Naive thymus-derived CD4-positive, alpha-beta T cell (primary cell): ENCODE measurements at regions of chr14 and their contacts with region 1.

Region 1: DNA sequence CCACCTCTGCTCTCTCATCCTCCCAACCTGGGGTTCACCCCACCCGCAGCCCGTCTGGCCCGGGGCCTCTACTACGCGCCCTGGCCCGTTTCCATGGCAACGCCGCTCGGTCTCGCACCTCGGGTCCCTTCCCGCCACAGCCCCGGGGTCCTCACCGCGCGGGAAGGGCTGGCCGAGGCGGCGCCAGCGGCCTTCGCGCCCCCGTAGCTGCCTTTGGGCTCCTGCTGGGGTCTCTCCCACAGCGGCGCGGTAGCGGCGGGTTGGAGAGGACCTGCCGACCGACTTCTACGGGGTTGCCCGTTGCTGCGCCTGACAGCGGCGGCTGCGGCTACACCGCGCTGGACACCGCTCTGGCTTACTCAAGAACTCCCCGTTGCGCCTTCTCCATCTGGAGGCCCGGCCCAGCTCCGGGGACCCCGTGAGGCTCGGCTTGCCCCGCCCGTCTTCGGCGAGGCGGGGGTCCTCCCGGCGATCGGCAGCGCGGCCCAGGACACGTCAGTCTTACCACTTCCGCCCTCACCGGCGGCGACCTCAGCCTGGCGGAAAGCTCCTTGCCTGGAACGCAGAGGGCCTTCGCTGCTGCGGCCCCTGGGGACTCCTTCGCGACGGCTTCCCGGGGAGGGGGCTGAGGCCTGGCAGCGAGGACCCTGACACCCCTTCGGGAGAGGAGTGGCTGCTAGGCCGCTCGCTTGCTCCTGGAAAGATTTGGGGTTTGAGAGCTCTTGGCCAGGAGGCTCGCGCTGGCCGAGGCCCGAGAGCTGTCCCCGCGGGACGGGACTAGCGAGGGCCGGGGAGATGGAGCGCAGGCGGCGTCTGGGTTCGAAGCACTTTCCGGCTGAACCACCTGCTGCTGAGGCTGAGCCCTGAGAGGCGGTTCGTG is at the start of gene TM9SF1:
- DNase-seq: peak; percentile 86 to 92 (median 90)
- ATAC-seq: peak; percentile 90
- H3K4me3 ChIP-seq: peak within 1 kb of the TSS; percentile 74
- H3K4me3 Mint-ChIP-seq: peak within 1 kb of the TSS; percentile 88 to 97 (median 93)
- H3K27ac ChIP-seq: peak within 1 kb of the TSS; percentile 99
- H3K27ac Mint-ChIP-seq: peak within 1 kb of the TSS; percentile 88 to 98 (median 98)
- H3K4me1 ChIP-seq: peaks cover 14 to 16% of the 10 kb centered on the region in 2 donors
- H3K4me1 Mint-ChIP-seq: peaks cover 38 to 69% (median 59%) of the 10 kb centered on the region in 7 donors
- H3K27me3 ChIP-seq: no peaks in the 10 kb centered on the region
- H3K27me3 Mint-ChIP-seq: no peaks in the 10 kb centered on the region
- total RNA-seq, gene TM9SF1: 16.2 to 40.5 (median 19.2) TPM

Region 2: DNA sequence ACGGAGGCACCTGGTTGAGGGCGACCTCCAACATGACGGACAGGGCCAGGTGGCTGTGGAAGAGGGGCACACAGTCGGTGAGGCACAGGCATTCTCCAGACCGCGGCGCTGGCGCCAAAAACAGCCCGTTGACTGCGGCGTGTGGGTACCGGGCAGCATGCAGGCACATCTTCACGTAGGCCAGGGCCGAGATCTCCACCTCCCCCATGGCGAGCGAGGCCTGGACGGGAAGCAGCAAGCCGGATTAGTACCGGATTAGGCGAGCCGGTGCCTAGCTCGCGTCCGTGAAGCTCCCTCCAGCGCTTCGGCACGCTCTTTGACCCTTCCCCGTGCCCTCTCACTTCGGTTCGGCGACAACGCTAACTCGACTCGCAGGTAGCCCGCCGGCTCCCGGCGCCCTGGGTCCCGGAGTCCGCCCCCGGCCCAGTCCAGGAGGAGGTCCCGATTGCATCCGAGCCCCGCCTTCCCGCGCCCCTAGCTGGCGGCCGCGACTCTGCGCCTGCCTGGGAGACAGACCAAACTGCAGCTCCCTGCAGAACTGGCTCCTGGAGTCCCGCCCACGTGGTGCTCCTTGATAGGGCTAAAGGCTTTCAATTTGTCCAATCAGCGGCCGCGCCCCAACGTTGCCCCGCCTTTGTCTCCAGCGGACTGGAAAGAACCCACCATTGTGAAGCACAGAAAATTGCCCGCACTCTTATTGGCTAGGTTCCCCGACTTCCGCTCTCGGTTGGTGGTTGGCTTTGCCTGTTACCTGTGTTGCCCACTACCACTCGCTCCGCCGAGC is 54.1 kb before region 1 on chr14 and contains the start of gene EMC9:
- CTCF ChIA-PET with region 1: interaction called, 4 read pairs
- POLR2A ChIA-PET with region 1: interaction called, 9 read pairs
- intact Hi-C with region 1: loop called (anchors 1 kb)
- DNase-seq: peak; percentile 90 to 100 (median 99)
- ATAC-seq: peak; percentile 94
- H3K4me3 ChIP-seq: peak within 1 kb of the TSS; percentile 87
- H3K4me3 Mint-ChIP-seq: peak within 1 kb of the TSS; percentile 85 to 100 (median 94)
- H3K27ac ChIP-seq: peak within 1 kb of the TSS; percentile 83
- H3K27ac Mint-ChIP-seq: peak within 1 kb of the TSS; percentile 83 to 96 (median 93)
- H3K4me1 ChIP-seq: peaks cover 33 to 43% of the 10 kb centered on the region in 2 donors
- H3K4me1 Mint-ChIP-seq: peaks cover 47 to 87% (median 77%) of the 10 kb centered on the region in 7 donors
- H3K27me3 ChIP-seq: no peaks in the 10 kb centered on the region
- H3K27me3 Mint-ChIP-seq: no peaks in the 10 kb centered on the region
- total RNA-seq, gene EMC9: 9.0 to 25.5 (median 22.3) TPM

Region 3: DNA sequence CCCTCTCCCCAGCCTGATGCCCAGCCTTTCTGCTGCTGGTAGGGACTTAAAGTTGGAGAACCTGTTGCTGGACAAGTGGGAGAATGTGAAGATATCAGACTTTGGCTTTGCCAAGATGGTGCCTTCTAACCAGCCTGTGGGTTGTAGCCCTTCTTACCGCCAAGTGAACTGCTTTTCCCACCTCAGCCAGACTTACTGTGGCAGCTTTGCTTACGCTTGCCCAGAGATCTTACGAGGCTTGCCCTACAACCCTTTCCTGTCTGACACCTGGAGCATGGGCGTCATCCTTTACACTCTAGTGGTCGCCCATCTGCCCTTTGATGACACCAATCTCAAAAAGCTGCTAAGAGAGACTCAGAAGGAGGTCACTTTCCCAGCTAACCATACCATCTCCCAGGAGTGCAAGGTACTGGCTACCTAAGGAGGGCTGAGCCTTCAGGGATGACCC is 11.7 kb after region 1 on chr14:
- CTCF ChIA-PET with region 1: interaction called, 6 read pairs
- POLR2A ChIA-PET with region 1: interaction called, 79 read pairs
- intact Hi-C with region 1: no loop called
- DNase-seq: no peak
- ATAC-seq: peak; percentile 37
- H3K4me3 ChIP-seq: no peak overlapping the region
- H3K4me3 Mint-ChIP-seq: no peak overlapping the region
- H3K27ac ChIP-seq: no peak overlapping the region
- H3K27ac Mint-ChIP-seq: peak overlapping the region in 6 of 9 donors; percentile 10 to 57 (median 32)
- H3K4me1 ChIP-seq: peaks cover 8 to 10% of the 10 kb centered on the region in 2 donors
- H3K4me1 Mint-ChIP-seq: peaks cover 26 to 62% (median 47%) of the 10 kb centered on the region in 7 donors
- H3K27me3 ChIP-seq: no peaks in the 10 kb centered on the region
- H3K27me3 Mint-ChIP-seq: no peaks in the 10 kb centered on the region